Colonic mucosa (tissue), 4 donors: ENCODE measurements at regions of chr6 and their contacts with region 1.

Region 1: DNA sequence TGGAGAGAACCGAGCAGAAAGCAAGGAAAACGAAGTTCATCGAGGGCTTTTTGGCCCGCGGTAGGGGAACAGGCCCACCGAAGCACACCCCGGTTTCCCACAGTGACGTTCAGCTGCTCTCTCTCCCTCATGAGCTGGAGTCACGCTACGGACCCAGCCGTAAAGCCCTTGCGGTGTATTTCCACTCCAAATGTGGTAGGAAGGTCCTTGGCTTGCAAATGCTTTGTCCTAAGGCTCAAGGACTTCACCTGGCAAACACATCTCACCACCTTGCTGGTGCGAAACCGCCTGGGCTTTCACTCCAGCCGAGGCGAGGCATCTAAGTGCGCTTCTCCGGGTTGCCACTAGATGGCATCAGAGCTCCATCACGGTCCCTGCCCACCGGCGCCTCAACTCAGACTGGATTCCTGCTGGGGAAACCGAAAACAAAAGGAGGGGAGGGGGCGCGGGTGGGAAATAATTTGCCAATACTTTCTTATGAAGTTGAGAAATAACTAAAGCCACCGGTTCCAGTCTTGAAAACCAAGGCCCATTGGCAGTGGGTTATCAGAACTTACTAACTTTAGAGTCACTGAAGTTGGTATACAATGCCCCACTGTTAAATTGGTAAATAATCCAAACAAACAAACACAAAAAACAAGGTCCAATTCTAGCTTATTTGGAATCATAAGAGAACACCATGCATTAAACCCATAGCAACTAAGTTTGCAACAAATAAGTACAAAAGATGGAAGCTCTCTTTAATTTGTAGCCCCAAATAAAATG is 13.4 kb upstream of the FOXC1 start:
- DNase-seq: peak; percentile 56
- H3K4me3 ChIP-seq: no peak overlapping the region
- H3K27ac ChIP-seq: no peak overlapping the region
- H3K4me1 ChIP-seq: no peaks in the 10 kb centered on the region
- H3K27me3 ChIP-seq: peaks cover 29% of the 10 kb centered on the region
- CTCF ChIP-seq: peak; percentile 83

Region 2: DNA sequence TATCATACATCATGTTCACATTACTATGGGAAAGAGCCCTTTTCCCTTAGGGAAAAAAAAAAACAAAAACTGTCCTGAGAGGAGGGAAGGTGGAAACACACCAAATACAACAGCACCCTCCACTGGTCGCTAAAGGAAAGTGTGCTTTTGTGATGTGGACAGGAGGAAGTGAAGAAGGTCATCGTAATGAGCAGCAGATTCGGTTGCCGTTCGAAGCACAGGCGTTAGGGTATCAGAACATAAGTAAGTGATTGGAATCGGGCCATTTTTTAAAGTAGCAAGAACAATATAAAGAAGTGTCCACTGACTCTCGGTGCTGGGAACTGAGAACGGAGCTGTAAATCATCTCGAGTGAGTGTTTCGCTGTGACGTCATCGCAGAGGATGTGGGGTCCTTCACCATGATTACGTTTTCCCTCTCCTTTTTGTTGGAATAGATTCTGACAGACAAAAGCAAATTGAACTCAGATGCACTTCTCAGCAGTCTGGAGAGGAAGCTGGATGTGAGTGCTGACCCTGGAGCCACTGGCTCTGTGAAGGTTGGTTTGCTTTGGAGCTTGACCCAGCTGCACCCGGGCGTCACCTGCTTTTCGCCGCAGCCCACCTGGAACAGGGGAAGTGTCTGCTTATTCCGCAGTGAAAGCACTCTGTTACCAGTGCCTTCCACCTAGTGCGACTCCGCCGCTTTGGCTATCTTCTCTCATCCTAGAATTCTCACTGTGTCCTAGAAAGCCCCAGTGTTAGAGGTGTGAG is 852.7 kb after region 1 on chr6:
- intact Hi-C with region 1: loop called (anchors 5 kb)
- DNase-seq: peak; percentile 61
- H3K4me3 ChIP-seq: no peak overlapping the region
- H3K27ac ChIP-seq: no peak overlapping the region
- H3K4me1 ChIP-seq: peaks cover 10% of the 10 kb centered on the region
- H3K27me3 ChIP-seq: no peaks in the 10 kb centered on the region
- CTCF ChIP-seq: peak; percentile 49

Region 3: GRCh38 chr6:2639896-2640295 is 1043.6 kb after region 1 on chr6:
- intact Hi-C with region 1: loop called (anchors 5 kb)
- DNase-seq: no peak
- H3K4me3 ChIP-seq: no peak overlapping the region
- H3K27ac ChIP-seq: no peak overlapping the region
- H3K4me1 ChIP-seq: no peaks in the 10 kb centered on the region
- H3K27me3 ChIP-seq: no peaks in the 10 kb centered on the region
- CTCF ChIP-seq: no peak

Region 4: DNA sequence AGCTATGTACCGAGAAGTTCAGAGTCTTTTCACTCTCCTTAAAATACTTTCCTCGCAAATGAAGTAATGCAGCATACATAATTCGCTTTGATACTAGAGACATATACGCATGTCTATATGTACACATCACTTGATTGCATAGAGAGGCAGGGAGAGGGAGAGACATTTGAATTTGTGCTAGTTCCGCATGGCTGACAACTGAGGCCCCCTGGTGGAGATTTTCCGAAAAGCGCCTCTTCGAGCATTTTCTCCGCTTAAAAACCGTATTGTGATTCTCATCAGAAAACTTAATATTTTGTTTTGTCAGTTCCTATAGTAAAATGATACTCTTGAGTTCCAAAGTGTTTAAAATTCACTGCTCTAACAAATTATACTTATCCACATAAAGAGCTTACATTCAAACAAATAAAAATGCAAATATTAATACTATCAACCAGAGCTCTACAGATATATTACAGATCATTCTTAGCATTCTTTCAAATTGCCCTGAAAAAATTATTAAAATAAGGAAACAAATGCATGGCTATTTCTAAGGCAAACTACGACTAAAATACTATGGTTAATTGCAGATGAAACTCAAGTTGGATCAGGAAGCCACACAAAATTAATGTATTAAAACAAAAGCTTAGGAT is 1153.8 kb after region 1 on chr6:
- intact Hi-C with region 1: loop called (anchors 5 kb)
- DNase-seq: peak; percentile 71
- H3K4me3 ChIP-seq: no peak overlapping the region
- H3K27ac ChIP-seq: no peak overlapping the region
- H3K4me1 ChIP-seq: no peaks in the 10 kb centered on the region
- H3K27me3 ChIP-seq: no peaks in the 10 kb centered on the region
- CTCF ChIP-seq: peak; percentile 87